Right lobe of liver (tissue), 6 donors: ENCODE measurements at regions of chr13 and their contacts with region 1.

Region 1: GRCh38 chr13:51286135-51287002 is 53.1 kb upstream of the SERPINE3 start:
- DNase-seq: peak; percentile 82 to 84 (median 84)
- ATAC-seq: peak; percentile 91 to 94 (median 92)
- H3K4me3 ChIP-seq: no peak overlapping the region
- H3K27ac ChIP-seq: no peak overlapping the region
- H3K4me1 ChIP-seq: peaks cover 0 to 9% (median 3%) of the 10 kb centered on the region in 4 donors
- H3K27me3 ChIP-seq: no peaks in the 10 kb centered on the region
- CTCF ChIP-seq: peak; percentile 85 to 94 (median 92)
- POLR2A ChIP-seq: no peak

Region 2: DNA sequence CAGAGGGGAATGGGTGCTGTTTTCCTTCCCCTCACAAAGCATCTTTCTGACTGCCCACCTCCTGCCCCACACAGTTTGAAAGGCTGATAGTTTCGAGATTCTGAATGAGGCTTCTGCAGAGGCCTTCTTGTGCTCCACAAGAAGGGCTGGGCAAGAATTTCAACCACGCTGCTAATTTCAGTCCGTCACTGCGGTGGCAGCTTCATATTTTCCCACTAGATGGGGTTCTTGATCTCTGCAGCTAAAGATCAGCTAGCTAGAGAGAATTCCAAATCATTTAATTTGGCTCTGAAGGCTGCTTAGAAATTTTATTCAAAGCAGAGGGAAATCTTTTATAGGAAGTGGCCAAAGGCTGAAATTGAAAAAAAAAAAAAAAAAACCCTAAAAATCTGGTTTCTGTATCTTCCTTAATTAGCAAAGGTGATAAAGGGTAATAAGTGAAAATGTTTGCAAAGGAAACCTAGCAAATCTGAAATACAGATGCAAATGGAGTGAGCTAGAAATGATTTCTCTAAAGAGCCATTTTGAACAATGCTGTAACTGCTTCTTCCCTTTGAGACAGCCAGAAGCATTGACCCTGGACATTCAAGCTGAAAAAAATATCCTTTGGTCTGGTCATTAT is 137.3 kb before region 1 on chr13:
- intact Hi-C with region 1: loop called (anchors 5 kb)
- DNase-seq: no peak
- ATAC-seq: peak; percentile 61 to 80 (median 75)
- H3K4me3 ChIP-seq: no peak overlapping the region
- H3K27ac ChIP-seq: no peak overlapping the region
- H3K4me1 ChIP-seq: peaks cover 0 to 22% (median 4%) of the 10 kb centered on the region in 4 donors
- H3K27me3 ChIP-seq: no peaks in the 10 kb centered on the region
- CTCF ChIP-seq: peak; percentile 53 to 73 (median 61)
- POLR2A ChIP-seq: no peak

Region 3: GRCh38 chr13:51154029-51154555 is 132.3 kb before region 1 on chr13:
- intact Hi-C with region 1: loop called (anchors 5 kb)
- DNase-seq: no peak
- ATAC-seq: peak in 1 of 4 donors; percentile 58
- H3K4me3 ChIP-seq: no peak overlapping the region
- H3K27ac ChIP-seq: no peak overlapping the region
- H3K4me1 ChIP-seq: peaks cover 0 to 28% (median 4%) of the 10 kb centered on the region in 4 donors
- H3K27me3 ChIP-seq: no peaks in the 10 kb centered on the region
- CTCF ChIP-seq: no peak
- POLR2A ChIP-seq: no peak